ENCODE measurements at regions of chr3 and their contacts with region 1.

Region 1: DNA sequence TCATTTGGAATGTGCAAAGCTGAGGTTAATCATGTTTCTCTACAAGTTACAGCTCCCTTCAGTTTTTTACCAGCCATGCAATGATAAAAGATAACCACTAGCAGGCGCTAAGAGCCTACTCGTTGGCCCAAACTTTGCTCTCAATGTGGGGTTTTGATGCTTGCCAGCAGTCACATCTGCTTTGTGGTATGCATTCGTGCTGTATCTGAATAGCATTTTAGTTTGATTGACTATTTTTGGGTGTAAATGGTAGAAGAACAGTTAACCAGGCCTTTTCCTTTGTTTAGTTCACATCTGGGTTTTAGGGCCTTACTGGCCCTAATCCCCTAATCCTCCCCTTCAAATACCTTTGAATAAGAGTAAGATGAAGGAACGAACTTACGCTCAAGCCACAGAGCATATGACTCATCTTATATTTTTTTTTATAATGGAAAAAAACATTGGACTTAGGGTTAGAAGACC is 4.4 kb upstream of the CLDN11 start:
- DNase-seq: peak; percentile 43
- ATAC-seq: peak; percentile 77
- H3K4me3 Mint-ChIP-seq: no peak overlapping the region
- H3K27ac Mint-ChIP-seq: no peak overlapping the region
- H3K4me1 Mint-ChIP-seq: peaks cover 7% of the 10 kb centered on the region
- H3K27me3 Mint-ChIP-seq: peaks cover 22% of the 10 kb centered on the region
- CTCF ChIP-seq: peak; percentile 84

Region 2: DNA sequence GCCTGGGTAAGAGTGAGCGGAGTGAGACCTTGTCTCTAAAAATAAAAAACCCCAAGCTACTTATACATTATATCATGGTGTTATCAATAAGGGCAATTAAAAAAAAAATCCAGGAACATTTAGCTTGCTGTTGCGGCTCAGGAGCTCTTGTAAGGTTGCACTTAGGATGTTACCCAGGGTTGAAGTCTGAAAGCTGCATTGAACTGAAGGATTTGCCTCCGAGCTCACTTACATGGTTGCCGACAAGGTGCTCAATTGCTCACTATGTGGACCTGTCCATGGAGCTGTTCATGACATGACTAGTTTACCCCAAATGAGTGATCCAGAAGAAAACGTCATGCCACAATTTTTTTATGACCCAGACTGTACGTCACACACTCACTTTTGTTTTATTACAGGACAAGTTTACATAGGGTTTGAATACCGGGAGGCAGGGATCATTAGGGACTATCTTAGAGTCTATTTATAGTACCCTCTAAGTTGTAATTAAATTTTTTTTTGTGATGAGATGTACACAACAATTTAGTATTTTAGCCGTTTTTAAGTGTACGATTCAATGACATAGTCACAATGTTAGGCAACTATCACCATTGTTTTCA is 16.6 kb before region 1 on chr3:
- CTCF ChIA-PET with region 1: interaction called, 13 read pairs
- POLR2A ChIA-PET with region 1: no interaction called
- intact Hi-C with region 1: no loop called
- DNase-seq: no peak
- ATAC-seq: no peak
- H3K4me3 Mint-ChIP-seq: no peak overlapping the region
- H3K27ac Mint-ChIP-seq: no peak overlapping the region
- H3K4me1 Mint-ChIP-seq: no peaks in the 10 kb centered on the region
- H3K27me3 Mint-ChIP-seq: no peaks in the 10 kb centered on the region
- CTCF ChIP-seq: no peak

Region 3: GRCh38 chr3:170440346-170440745 is 26.1 kb after region 1 on chr3:
- CTCF ChIA-PET with region 1: interaction called, 11 read pairs
- POLR2A ChIA-PET with region 1: no interaction called
- intact Hi-C with region 1: no loop called
- DNase-seq: no peak
- ATAC-seq: no peak
- H3K4me3 Mint-ChIP-seq: no peak overlapping the region
- H3K27ac Mint-ChIP-seq: no peak overlapping the region
- H3K4me1 Mint-ChIP-seq: peaks cover 14% of the 10 kb centered on the region
- H3K27me3 Mint-ChIP-seq: peaks cover 12% of the 10 kb centered on the region
- CTCF ChIP-seq: no peak

Region 4: DNA sequence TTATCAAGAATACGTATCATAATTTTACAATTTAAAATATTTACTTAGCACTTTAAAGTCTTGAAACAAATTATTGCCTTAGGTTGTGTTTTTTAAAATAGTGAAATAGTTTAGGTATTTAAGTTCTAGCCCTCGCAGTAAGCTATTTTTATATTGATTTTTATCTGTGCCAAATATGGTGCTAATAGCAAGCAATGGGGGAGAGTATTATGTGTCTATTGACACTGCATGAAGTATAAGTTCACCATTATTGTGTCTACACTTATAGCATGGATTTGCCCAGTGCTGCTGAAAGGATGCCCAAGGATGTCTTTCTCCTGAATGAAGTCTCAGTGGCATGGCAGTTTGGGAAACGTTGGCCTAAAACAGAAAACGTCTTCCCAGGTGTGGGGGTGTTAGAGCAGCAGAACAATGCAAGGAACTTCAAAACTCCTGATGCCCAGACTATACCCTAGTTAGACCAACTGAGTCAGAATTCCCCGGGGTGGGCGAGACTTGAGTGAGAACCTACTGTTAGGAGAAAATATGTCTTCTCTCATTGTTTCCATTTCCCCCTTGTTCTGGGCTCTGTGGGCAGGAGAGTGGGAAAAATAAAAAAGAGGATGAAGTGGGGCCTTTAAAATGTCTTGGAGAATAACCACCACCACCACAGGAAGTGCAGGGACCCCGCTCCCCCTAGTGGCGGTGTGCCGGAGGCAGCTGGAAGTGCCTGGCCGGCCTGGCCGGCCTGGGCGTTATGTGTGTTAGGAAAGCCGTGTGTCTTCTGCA is 275.8 kb after region 1 on chr3:
- CTCF ChIA-PET with region 1: interaction called, 8 read pairs
- POLR2A ChIA-PET with region 1: no interaction called
- intact Hi-C with region 1: loop called (anchors 5 kb)
- DNase-seq: peak; percentile 68
- ATAC-seq: peak; percentile 60
- H3K4me3 Mint-ChIP-seq: no peak overlapping the region
- H3K27ac Mint-ChIP-seq: no peak overlapping the region
- H3K4me1 Mint-ChIP-seq: no peaks in the 10 kb centered on the region
- H3K27me3 Mint-ChIP-seq: no peaks in the 10 kb centered on the region
- CTCF ChIP-seq: peak; percentile 77